HCT116 (cell line): ENCODE measurements at regions of chr7 and their contacts with region 1.

Region 1: GRCh38 chr7:518630-519483 is 789 bp downstream of the PDGFA start:
- DNase-seq: no peak
- ATAC-seq: peak; percentile 61
- H3K4me3 ChIP-seq: peak overlapping the region; percentile 52 to 94
- H3K27ac ChIP-seq: peak overlapping the region; percentile 83
- H3K4me1 ChIP-seq: peaks cover 25 to 56% of the 10 kb centered on the region in 2 experiments
- H3K27me3 ChIP-seq: no peaks in the 10 kb centered on the region
- CTCF ChIP-seq: no peak
- POLR2A ChIP-seq: no peak
- RAD21 ChIP-seq: no peak

Region 2: GRCh38 chr7:537911-538634 is 19.2 kb after region 1 on chr7:
- CTCF ChIA-PET with region 1: no interaction called
- POLR2A ChIA-PET with region 1: interaction called, 3 read pairs
- RAD21 ChIA-PET with region 1: interaction called in 1 of 2 experiments, 5 read pairs
- intact Hi-C with region 1: loop called (anchors 2 kb)
- DNase-seq: peak; percentile 83
- ATAC-seq: peak; percentile 75
- H3K4me3 ChIP-seq: peak overlapping the region; percentile 51 to 61
- H3K27ac ChIP-seq: peak overlapping the region; percentile 100
- H3K4me1 ChIP-seq: peaks cover 37 to 56% of the 10 kb centered on the region in 2 experiments
- H3K27me3 ChIP-seq: no peaks in the 10 kb centered on the region
- CTCF ChIP-seq: no peak
- POLR2A ChIP-seq: no peak
- RAD21 ChIP-seq: no peak

Region 3: GRCh38 chr7:568031-568951 is 49.4 kb after region 1 on chr7:
- CTCF ChIA-PET with region 1: no interaction called
- POLR2A ChIA-PET with region 1: no interaction called
- RAD21 ChIA-PET with region 1: no interaction called
- intact Hi-C with region 1: no loop called
- DNase-seq: no peak
- ATAC-seq: no peak
- H3K4me3 ChIP-seq: no peak overlapping the region
- H3K27ac ChIP-seq: no peak overlapping the region
- H3K4me1 ChIP-seq: no peaks in the 10 kb centered on the region
- H3K27me3 ChIP-seq: no peaks in the 10 kb centered on the region
- CTCF ChIP-seq: no peak
- POLR2A ChIP-seq: no peak
- RAD21 ChIP-seq: no peak

Region 4: DNA sequence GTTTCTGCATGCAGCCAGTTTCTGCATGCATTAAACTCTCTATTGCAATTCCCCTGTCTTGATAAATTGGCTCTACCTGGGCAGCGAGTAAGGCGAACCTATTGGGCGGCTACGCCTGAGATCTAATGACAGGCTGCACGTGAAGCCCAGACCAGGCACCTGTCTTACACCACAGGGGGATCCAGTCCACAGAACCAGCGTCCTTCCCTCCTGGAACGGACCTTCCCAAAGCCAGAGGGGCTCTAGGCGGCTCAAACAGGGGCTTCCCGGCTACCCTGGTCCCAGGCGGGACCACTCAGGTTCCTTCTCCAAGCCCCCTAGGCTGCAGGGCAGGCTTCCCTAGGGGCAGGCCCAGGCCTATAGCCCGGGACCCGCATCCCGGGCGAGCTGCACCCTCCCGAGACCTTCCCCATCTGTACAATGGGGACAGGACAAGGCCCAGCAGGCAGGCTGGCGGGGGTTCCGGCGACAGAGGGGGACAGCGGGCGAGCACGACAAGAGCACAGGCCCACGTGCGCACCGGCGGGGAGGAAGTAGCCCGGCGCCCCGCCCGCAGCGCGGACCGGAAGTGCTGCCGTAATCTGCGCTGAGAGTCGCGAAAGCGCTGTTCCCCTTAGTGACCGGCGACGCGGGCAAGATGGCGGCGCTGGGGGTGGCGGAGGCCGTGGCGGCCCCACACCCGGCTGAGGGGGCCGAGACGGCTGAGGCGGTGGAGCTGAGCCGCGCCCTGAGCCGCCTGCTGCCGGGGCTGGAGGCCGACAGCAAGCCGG is 207.4 kb after region 1 on chr7 and contains the start of gene DNAAF5:
- CTCF ChIA-PET with region 1: no interaction called
- POLR2A ChIA-PET with region 1: no interaction called
- RAD21 ChIA-PET with region 1: no interaction called
- intact Hi-C with region 1: loop called (anchors 5 kb)
- DNase-seq: peak; percentile 77
- ATAC-seq: peak; percentile 73
- H3K4me3 ChIP-seq: peak within 1 kb of the TSS; percentile 58 to 67
- H3K27ac ChIP-seq: peak within 1 kb of the TSS; percentile 96
- H3K4me1 ChIP-seq: peaks cover 9 to 25% of the 10 kb centered on the region in 2 experiments
- H3K27me3 ChIP-seq: no peaks in the 10 kb centered on the region
- CTCF ChIP-seq: no peak
- POLR2A ChIP-seq: peak; percentile 42
- RAD21 ChIP-seq: no peak
- total RNA-seq, gene DNAAF5: 69.4 TPM

Region 5: DNA sequence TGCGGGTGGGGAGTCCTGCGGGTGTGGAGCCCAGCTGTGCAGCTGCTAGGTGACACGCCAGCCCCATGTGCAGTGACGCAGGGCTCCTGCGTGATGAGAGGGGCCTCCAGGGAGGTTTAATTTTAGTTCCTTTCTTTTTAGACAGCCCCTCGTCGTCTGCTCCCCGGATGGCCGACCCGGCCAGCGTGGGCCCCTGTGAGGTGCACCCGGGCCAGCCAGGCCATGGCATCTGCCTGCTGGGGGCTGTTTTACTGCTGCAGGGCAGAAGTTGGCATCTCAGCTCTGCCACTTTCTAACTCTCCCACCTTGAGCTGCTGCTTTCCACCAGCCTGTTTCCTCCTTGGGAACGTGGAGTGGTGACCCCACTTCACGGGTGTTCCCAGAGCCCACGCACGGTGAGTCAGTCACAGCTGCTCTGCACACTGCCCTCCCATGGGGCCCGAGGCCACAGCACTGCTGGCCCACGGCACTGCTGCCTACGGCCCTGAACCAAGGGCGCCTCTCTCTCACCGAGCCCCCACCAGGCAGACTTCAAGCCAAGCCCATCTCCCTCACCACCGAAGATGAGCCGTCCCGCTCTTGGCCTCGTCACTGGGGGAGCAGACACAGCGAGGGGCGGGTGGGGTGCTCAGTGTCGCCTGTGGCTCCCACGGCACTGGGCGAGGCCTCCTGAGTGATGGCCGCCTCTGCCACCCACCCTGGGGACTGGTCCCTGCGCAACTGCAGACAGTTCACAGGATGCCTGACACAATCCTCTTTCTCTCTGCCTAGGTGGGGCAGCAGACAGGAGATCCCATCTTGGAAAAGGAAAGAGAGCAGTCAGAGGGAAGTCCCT is 485.4 kb after region 1 on chr7:
- CTCF ChIA-PET with region 1: no interaction called
- POLR2A ChIA-PET with region 1: no interaction called
- RAD21 ChIA-PET with region 1: no interaction called
- intact Hi-C with region 1: no loop called
- DNase-seq: no peak
- ATAC-seq: no peak
- H3K4me3 ChIP-seq: no peak overlapping the region
- H3K27ac ChIP-seq: no peak overlapping the region
- H3K4me1 ChIP-seq: no peaks in the 10 kb centered on the region
- H3K27me3 ChIP-seq: no peaks in the 10 kb centered on the region
- CTCF ChIP-seq: no peak
- POLR2A ChIP-seq: no peak
- RAD21 ChIP-seq: no peak

Region 6: DNA sequence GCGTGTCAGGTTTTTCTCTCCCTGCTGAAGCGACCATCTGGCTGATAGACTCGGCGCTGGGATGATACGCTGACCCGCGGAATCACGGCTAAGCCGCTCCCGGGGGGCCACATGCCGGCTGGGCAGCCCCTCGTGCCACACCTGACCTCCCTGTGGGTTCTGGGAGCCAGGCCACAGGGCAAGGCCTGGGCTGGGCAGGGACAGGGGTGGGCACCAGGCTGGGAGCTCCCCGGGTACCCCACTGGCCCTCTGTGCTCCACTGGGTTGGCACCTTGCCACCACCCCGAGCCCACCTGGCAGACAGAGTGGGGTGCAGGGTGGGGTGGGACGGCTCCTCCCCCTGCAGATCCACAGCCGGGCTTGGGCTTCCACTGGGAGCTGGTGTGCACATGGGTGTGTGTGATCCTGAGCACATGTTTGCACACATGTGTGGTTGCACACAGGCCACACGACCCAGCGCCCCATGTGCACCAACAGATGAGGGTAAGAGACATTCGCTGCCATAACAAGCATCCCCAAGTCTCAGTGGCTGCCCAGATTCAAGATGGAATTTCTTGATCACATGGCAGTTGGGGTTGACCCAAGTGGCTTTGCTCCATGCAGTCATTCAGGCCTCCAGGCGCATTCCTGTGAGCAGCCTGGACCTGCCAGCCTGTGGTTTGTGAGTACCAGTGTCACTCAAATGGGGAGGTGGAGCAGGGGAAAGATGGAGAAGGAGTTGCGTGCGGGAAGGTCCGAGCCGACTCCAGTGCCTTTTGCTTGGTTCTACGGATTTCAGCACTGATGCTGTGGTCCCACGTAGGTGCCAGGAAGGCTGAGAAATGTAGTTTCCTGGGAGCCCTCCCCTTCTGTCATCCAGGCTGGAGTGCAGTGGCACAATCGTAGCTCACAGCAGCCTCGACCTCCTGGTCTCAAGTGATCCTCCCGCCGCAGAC is 793.5 kb after region 1 on chr7:
- CTCF ChIA-PET with region 1: no interaction called
- POLR2A ChIA-PET with region 1: no interaction called
- RAD21 ChIA-PET with region 1: no interaction called
- intact Hi-C with region 1: no loop called
- DNase-seq: no peak
- ATAC-seq: no peak
- H3K4me3 ChIP-seq: no peak overlapping the region
- H3K27ac ChIP-seq: no peak overlapping the region
- H3K4me1 ChIP-seq: no peaks in the 10 kb centered on the region
- H3K27me3 ChIP-seq: no peaks in the 10 kb centered on the region
- CTCF ChIP-seq: no peak
- POLR2A ChIP-seq: no peak
- RAD21 ChIP-seq: no peak